CD4-positive, alpha-beta T cell (primary cell): ENCODE measurements at regions of chr15 and their contacts with region 1.

Region 1: DNA sequence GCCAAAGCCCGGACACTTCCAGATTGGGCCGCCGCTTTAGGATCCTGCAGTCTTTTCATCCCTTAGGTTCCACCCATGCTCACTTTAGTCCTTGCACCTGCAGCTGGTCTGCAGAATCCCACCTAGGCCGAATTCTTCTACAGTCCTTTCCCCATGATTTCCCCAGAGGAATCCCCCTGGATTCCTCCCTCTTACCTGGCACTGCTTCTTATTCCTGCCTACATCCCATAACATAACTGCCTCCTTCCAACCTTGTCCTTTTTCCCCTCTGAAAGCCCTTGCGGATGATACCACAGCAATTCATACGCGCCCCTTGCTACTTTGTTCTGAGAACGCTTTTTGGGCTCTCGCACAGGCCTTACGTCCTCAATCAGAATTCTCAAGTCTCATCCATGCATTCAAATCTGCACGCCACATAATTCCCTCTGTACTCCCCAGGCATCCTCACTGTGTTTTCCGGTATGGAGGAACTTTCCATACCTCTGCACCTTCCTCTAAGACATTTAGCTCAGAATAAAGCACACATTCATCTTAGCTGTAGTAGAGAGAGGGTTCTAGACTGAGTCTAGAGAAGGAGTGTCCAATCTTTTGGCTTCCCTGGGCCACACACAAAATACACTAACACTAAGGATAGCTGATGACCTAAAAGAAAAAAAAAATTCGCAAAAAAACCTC is 619 bp downstream of the EIF2AK4 start:
- DNase-seq: peak in 4 of 14 experiments; percentile 2 to 25 (median 10)
- ATAC-seq: peak; percentile 4
- H3K4me3 ChIP-seq: peak overlapping the region; percentile 66
- H3K4me3 Mint-ChIP-seq: peak overlapping the region; percentile 88
- H3K27ac ChIP-seq: no peak overlapping the region
- H3K27ac Mint-ChIP-seq: peak overlapping the region; percentile 28
- H3K4me1 ChIP-seq: peaks cover 24% of the 10 kb centered on the region
- H3K4me1 Mint-ChIP-seq: peaks cover 31% of the 10 kb centered on the region
- H3K27me3 ChIP-seq: no peaks in the 10 kb centered on the region
- H3K27me3 Mint-ChIP-seq: no peaks in the 10 kb centered on the region
- CTCF ChIP-seq: no peak

Region 2: DNA sequence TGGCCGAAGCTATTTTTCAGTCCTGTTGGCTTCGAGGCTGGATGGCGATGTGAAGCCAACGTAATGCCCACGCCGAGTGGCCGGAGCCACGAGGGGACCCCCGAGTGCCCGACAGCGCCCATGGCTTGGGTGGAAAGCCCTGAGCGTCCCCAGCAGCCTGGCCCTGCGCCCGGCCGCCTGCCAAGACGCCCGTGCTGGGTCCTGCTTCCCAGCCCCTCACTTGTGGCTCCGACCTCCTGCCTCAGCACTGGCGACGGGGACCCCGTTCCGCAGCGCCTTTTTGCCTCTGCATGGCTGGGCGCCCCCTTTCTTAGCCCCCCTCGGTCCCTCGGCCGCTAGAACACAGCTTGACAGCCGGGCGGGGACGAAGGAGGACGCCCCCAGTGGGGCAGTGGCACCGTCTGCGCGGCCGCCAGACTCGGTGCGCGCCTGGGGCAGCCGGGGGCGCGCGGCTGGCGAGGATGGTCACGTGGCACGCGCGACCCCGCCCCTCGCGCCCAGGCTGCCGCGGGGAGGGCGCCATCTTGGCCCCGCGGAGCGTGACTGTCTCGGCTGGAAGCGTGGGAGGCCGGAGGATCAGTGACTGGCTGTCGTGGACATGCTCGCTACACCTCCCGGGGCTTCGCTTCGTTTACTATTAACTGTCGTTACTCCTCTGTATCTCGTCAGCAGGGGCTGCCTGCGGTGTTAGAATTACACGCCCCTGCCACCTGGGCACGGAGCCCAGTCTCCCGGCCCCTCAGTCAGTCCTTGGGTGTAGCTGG is 13.8 kb before region 1 on chr15:
- CTCF ChIA-PET with region 1: interaction called, 3 read pairs
- POLR2A ChIA-PET with region 1: interaction called, 11 read pairs
- intact Hi-C with region 1: loop called (anchors 1 to 2 kb)
- DNase-seq: peak; percentile 44 to 89 (median 70)
- ATAC-seq: peak; percentile 94
- H3K4me3 ChIP-seq: peak overlapping the region; percentile 62
- H3K4me3 Mint-ChIP-seq: peak overlapping the region; percentile 88
- H3K27ac ChIP-seq: no peak overlapping the region
- H3K27ac Mint-ChIP-seq: peak overlapping the region; percentile 66
- H3K4me1 ChIP-seq: peaks cover 21% of the 10 kb centered on the region
- H3K4me1 Mint-ChIP-seq: peaks cover 15% of the 10 kb centered on the region
- H3K27me3 ChIP-seq: peaks cover 13 to 45% of the 10 kb centered on the region in 2 experiments
- H3K27me3 Mint-ChIP-seq: peaks cover 28% of the 10 kb centered on the region
- CTCF ChIP-seq: no peak

Region 3: DNA sequence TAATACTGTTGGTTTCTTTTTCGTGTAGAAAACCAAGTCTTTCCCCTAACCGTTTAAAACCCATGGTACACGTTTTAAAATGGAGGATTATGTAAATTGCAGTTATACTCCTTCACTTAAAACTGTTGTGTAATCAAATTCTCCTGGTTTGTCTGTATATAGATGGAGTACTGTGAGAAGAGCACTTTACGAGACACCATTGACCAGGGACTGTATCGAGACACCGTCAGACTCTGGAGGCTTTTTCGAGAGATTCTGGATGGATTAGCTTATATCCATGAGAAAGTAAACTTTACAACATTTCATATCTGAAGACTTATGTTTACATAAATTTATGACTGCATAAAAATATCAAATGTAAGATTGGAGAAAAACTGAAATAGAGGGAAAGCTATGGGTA is 53.3 kb after region 1 on chr15:
- CTCF ChIA-PET with region 1: no interaction called
- POLR2A ChIA-PET with region 1: no interaction called
- intact Hi-C with region 1: no loop called
- DNase-seq: no peak
- ATAC-seq: no peak
- H3K4me3 ChIP-seq: no peak overlapping the region
- H3K4me3 Mint-ChIP-seq: no peak overlapping the region
- H3K27ac ChIP-seq: no peak overlapping the region
- H3K27ac Mint-ChIP-seq: no peak overlapping the region
- H3K4me1 ChIP-seq: no peaks in the 10 kb centered on the region
- H3K4me1 Mint-ChIP-seq: no peaks in the 10 kb centered on the region
- H3K27me3 ChIP-seq: no peaks in the 10 kb centered on the region
- H3K27me3 Mint-ChIP-seq: no peaks in the 10 kb centered on the region
- CTCF ChIP-seq: no peak

Region 4: DNA sequence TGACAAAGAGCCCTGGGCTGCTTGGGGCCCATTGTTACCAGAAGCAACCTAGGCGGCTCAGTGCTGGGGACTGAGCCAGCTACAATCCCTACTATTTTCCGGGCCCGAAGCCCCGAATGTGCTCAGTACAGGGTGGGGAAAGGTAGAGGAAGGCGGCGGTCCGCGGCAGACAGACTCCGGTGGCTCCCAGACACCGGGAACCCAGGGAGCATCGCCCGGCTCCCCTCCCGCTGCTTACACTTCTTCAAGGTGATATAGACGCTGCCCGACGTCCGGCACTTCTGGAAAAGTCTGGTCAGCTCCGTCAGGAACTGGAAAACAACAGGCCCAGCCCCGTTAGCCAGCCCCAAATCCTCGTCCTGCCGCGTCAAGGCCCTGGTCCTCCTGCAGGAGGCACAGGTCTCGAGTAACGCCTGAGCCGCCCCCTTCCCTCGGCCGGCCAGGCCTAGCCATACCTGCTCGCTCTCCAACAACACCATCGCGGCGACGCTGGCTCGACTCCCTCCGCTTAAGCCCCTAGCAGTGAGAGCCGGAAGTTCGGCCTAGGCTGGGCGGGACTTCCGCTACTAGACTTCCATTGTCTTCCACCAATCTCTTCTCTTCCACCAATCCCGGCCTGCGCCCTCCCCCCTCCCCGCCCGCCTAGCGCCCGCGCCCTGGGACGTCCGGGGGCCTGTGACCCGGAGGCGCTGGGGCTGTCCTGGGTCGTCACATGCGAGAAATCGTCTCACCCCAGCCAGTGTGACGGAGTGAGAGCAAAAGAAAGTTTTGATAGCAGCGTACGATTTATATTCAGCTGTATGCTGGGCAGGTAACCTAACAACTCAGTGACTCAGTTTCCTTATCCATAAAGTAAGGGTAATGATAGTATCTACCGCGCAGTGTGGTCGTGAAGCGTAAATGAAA is 104.4 kb after region 1 on chr15 and contains the start of gene SRP14:
- CTCF ChIA-PET with region 1: no interaction called
- POLR2A ChIA-PET with region 1: no interaction called
- intact Hi-C with region 1: loop called in 1 of 2 experiments (anchors 2 kb)
- DNase-seq: peak; percentile 85 to 96 (median 90)
- ATAC-seq: peak; percentile 92
- H3K4me3 ChIP-seq: peak within 1 kb of the TSS; percentile 95
- H3K4me3 Mint-ChIP-seq: peak within 1 kb of the TSS; percentile 100
- H3K27ac ChIP-seq: peak within 1 kb of the TSS; percentile 88 to 90
- H3K27ac Mint-ChIP-seq: peak within 1 kb of the TSS; percentile 97
- H3K4me1 ChIP-seq: peaks cover 20% of the 10 kb centered on the region
- H3K4me1 Mint-ChIP-seq: peaks cover 49% of the 10 kb centered on the region
- H3K27me3 ChIP-seq: no peaks in the 10 kb centered on the region
- H3K27me3 Mint-ChIP-seq: no peaks in the 10 kb centered on the region
- CTCF ChIP-seq: no peak
- total RNA-seq, gene SRP14: 120 to 126 TPM

Region 5: DNA sequence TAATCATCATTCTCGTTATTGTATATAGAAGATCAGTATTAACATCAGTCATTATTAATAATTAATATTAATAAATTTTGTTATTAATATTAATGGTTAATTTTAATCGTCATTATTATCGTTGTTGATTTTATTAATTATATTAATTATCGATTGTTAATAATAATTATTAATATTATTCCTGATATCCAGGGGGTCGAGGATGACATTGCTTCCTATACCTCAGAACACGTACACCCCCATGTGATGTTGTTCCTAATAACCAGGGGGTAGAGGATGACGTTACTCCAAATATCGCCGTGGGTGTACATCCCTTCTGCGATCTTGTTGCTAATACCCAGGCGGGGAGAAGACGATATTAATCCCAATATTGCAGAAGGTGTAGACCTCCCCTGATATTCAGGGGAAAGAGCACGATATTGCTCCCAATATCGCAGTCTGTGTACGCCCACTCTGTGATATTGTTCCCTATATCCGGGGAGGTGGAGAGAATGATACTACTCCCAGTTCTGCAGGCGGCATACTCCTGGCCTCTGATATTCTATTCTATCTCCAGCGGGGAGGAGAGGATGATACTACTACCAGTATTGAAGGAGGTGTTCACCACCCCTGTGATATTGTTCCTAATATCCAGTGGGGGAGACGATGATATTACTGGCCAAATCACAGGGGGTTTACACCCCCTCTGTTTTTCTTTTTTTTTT is 196.4 kb after region 1 on chr15:
- CTCF ChIA-PET with region 1: no interaction called
- POLR2A ChIA-PET with region 1: no interaction called
- intact Hi-C with region 1: no loop called
- DNase-seq: peak in 1 of 14 experiments; percentile 19
- ATAC-seq: no peak
- H3K4me3 ChIP-seq: no peak overlapping the region
- H3K4me3 Mint-ChIP-seq: no peak overlapping the region
- H3K27ac ChIP-seq: no peak overlapping the region
- H3K27ac Mint-ChIP-seq: no peak overlapping the region
- H3K4me1 ChIP-seq: no peaks in the 10 kb centered on the region
- H3K4me1 Mint-ChIP-seq: no peaks in the 10 kb centered on the region
- H3K27me3 ChIP-seq: no peaks in the 10 kb centered on the region
- H3K27me3 Mint-ChIP-seq: peaks cover 6% of the 10 kb centered on the region
- CTCF ChIP-seq: no peak

Region 6: DNA sequence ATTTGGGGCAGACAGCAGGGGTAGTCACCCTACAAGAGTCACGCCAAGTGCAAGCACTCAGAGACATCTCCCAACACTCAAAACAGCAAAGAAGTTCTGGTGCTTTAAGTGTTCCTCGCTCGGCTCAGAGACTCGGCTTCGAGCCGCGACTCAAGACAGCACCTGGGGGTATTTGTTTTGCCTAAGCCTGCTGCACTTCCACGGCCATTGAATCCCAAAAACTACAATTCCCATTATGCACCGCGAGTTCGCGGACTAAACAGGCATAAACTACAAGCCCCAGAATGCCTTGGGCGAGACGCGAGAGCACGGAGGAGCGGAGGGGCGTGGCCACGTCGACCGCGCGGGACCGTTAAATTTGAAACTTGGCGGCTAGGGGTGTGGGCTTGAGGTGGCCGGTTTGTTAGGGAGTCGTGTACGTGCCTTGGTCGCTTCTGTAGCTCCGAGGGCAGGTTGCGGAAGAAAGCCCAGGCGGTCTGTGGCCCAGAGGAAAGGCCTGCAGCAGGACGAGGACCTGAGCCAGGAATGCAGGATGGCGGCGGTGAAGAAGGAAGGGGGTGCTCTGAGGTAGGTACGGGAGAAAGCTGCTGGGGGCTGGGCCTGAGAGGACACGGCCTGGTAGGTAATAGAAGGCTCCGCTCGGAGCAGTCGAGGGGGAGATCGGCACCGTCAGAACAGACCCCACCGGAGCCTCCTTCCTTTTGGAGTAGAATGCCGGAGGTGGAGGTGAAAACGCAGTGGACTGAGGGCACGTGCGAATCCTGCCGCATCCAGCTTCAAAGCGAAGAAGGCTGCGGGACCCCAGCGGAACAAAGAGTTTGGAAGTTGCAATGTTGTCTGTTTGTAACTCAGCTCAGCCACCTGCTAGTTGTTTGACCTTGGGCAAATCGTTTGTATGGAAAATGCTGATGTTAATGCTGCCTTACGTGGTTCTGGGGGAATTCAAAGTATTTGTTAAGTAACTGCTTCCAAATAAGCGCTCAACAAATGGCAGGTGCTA is 226.5 kb after region 1 on chr15 and contains the start of gene BUB1B:
- CTCF ChIA-PET with region 1: no interaction called
- POLR2A ChIA-PET with region 1: no interaction called
- intact Hi-C with region 1: loop called in 1 of 2 experiments (anchors 5 kb)
- DNase-seq: peak; percentile 84 to 96 (median 90)
- ATAC-seq: peak; percentile 99
- H3K4me3 ChIP-seq: peak within 1 kb of the TSS; percentile 78
- H3K4me3 Mint-ChIP-seq: no peak within 1 kb of the TSS
- H3K27ac ChIP-seq: no peak within 1 kb of the TSS
- H3K27ac Mint-ChIP-seq: no peak within 1 kb of the TSS
- H3K4me1 ChIP-seq: peaks cover 12% of the 10 kb centered on the region
- H3K4me1 Mint-ChIP-seq: no peaks in the 10 kb centered on the region
- H3K27me3 ChIP-seq: no peaks in the 10 kb centered on the region
- H3K27me3 Mint-ChIP-seq: no peaks in the 10 kb centered on the region
- CTCF ChIP-seq: no peak
- total RNA-seq, gene BUB1B: 1.4 to 2.4 TPM